ENCODE measurements at regions of chr10 and their contacts with region 1.

Region 1: DNA sequence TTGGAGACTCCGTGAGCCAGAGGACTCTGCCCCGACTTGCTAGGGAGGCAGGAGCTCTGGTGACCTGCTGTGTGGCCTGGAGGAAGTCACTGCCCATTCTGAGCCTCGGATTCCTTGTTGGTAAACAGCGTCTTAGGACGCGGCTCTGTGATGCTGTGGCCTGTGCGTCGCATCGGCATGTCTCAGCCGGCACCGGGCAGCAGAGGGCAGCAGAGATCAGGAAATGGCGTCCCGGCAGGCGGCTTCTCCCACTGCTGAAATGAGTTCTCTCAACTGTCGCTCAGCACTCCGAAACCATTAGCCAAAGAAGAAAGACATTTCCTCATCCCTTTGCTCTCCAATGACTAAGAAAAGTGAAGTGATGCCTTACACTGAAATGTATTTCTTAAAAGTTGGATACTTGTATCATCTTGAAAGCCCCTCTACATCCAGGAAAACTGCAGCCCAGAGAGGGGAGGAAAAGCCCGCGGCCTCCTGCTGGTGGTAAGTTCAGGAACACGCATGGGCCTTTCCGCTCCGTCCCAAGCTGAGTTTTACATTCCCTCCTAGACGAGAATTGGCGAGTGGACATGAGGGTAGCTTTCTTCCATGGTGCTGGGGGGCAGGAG is 91.7 kb downstream of the WDR11 start:
- DNase-seq: peak; percentile 84
- H3K4me3 ChIP-seq: no peak overlapping the region
- H3K27ac ChIP-seq: no peak overlapping the region
- H3K4me1 ChIP-seq: no peaks in the 10 kb centered on the region
- H3K27me3 ChIP-seq: no peaks in the 10 kb centered on the region

Region 2: GRCh38 chr10:121734589-121735045 is 791.7 kb after region 1 on chr10:
- in situ Hi-C with region 1: loop called (anchors 10 kb)
- DNase-seq: peak; percentile 49
- H3K4me3 ChIP-seq: no peak overlapping the region
- H3K27ac ChIP-seq: no peak overlapping the region
- H3K4me1 ChIP-seq: no peaks in the 10 kb centered on the region
- H3K27me3 ChIP-seq: no peaks in the 10 kb centered on the region; the same call in 1 of the 2 replicates

Region 3: GRCh38 chr10:121900443-121901174 is 957.7 kb after region 1 on chr10:
- in situ Hi-C with region 1: loop called (anchors 10 kb)
- DNase-seq: peak; percentile 83
- H3K4me3 ChIP-seq: no peak overlapping the region
- H3K27ac ChIP-seq: no peak overlapping the region
- H3K4me1 ChIP-seq: no peaks in the 10 kb centered on the region
- H3K27me3 ChIP-seq: no peaks in the 10 kb centered on the region